Esophagus muscularis mucosa (tissue), 4 donors: ENCODE measurements at regions of chr16 and their contacts with region 1.

Region 1: GRCh38 chr16:23026784-23027362 is 122.4 kb downstream of the USP31 start:
- DNase-seq: no peak
- H3K4me3 ChIP-seq: no peak overlapping the region
- H3K27ac ChIP-seq: no peak overlapping the region
- H3K4me1 ChIP-seq: no peaks in the 10 kb centered on the region
- H3K27me3 ChIP-seq: peaks cover 0 to 20% (median 0%) of the 10 kb centered on the region in 4 donors
- CTCF ChIP-seq: no peak
- EP300 ChIP-seq: no peak
- POLR2A ChIP-seq: no peak

Region 2: GRCh38 chr16:22955461-22956070 is 71.3 kb before region 1 on chr16:
- intact Hi-C with region 1: no loop called
- DNase-seq: no peak
- H3K4me3 ChIP-seq: no peak overlapping the region
- H3K27ac ChIP-seq: no peak overlapping the region
- H3K4me1 ChIP-seq: no peaks in the 10 kb centered on the region
- H3K27me3 ChIP-seq: peaks cover 0 to 25% (median 0%) of the 10 kb centered on the region in 4 donors
- CTCF ChIP-seq: no peak
- EP300 ChIP-seq: no peak
- POLR2A ChIP-seq: no peak

Region 3: DNA sequence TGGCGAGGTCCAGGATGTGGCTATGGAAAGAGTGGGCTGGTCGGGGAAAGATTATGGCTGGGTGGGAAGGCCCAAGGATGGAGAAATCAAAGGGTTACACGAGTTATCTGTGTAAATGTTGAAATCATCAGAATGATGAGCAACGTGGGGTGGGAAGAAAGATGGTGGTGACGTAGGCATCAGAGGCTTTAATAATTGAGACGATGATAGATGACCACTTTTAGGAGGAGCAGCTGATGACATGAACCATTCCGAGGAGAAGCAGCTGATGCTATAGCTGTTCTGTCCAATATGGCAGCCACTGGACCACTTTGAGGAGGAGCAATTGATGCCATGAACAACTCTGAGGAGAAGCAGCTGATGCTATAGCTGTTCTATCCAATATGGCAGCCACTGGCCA is 18.8 kb before region 1 on chr16:
- intact Hi-C with region 1: loop called (anchors 1 kb)
- DNase-seq: no peak
- H3K4me3 ChIP-seq: no peak overlapping the region
- H3K27ac ChIP-seq: no peak overlapping the region
- H3K4me1 ChIP-seq: no peaks in the 10 kb centered on the region
- H3K27me3 ChIP-seq: peaks cover 0 to 14% (median 0%) of the 10 kb centered on the region in 4 donors
- CTCF ChIP-seq: no peak
- EP300 ChIP-seq: no peak
- POLR2A ChIP-seq: no peak